Dorsolateral prefrontal cortex (tissue), 120 donors: ENCODE measurements at regions of chr15 and their contacts with region 1.

Region 1: DNA sequence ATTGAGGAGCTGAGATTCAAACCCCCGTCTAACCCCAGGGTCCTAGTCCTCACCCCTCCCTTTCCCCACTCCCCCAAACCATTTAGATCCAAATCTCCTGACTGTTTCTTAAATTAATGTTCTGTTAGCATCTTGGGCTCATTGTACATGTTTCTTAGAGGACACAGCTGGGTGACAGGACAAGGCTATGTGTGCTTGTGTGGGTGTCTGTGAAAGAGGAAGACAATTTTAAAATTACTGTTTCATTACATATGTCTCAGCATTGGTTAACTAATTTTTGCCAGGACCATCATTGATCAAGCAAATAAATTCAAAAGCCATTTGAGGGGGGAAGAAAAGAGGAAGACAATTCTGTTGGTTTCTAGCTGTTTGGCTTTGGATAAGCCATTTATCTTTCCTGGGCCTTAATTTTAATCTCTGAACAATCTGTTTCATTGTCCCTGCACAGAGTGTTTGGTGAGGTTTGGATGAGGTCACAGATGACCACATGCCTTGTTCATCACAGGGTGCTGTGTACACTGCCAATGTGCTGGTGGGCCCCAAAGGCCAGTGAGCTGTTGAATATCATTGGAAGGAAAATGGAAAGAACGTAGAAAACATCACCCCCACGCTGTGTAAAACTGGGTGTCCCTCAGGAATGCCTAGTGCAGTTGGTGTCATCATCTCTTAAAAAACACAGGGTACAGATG is 51.9 kb downstream of the RPLP1 start:
- DNase-seq: no peak
- H3K4me3 ChIP-seq: no peak overlapping the region
- H3K27ac ChIP-seq: peak overlapping the region in 20 of 59 donors; percentile 0 to 69 (median 31)
- H3K27me3 ChIP-seq: no peaks in the 10 kb centered on the region
- CTCF ChIP-seq: no peak

Region 2: DNA sequence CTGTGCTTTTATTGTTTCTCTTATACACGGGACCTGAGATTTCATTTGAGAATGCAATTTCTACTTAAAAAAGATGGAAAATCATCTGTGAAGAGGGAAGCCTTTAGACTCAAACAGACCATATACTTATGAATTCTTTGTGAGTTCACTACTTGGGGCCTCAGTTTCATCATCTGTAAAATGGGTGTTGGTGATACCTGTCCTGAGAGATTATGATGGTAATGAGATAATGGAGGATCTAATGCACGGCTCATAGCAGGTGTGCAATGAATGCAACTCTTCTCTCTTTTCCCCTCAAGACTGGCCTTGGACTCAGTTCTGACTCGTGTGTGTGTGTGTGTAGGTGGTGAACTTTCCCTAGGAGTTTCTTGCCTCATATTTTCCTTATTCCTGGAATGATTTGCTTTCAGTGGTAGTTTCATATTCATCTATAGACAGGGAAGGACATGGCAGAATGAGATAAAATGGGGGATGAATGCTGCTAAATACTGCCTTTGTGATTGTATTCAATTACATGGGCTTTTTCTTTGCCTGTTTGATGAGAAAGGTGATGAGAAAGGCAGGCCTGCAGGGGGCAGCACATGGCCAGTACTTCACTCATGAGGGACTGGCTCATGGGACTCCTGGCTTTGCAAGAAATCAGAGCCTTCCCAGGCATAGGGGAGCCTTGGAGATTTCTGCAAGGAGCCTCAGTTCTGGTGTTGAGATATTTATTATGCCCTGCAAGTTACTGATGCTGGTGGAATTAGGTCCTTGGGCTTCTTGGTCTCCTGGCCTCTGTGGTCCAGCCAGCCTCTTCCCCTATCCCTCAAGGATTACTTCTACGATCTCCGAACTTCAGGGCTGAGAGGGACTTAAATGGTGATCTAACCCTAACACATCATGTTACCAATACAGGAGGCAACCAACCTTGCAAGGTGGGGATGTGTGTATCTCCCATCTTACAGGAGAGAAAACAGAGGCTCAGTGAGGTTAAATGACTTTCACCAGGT is 18.8 kb after region 1 on chr15:
- intact Hi-C with region 1: loop called in 1 of 2 experiments (anchors 2 kb)
- DNase-seq: peak; percentile 59 to 93 (median 83)
- H3K4me3 ChIP-seq: no peak overlapping the region
- H3K27ac ChIP-seq: peak overlapping the region in 6 of 59 donors; percentile 6 to 59 (median 50)
- H3K27me3 ChIP-seq: peaks cover 0 to 4% (median 0%) of the 10 kb centered on the region in 45 donors
- CTCF ChIP-seq: peak; percentile 57 to 91 (median 82)

Region 3: GRCh38 chr15:69903470-69904469 is 399.3 kb after region 1 on chr15:
- intact Hi-C with region 1: no loop called
- DNase-seq: no peak
- H3K4me3 ChIP-seq: no peak overlapping the region
- H3K27ac ChIP-seq: no peak overlapping the region
- H3K27me3 ChIP-seq: peaks cover 0 to 13% (median 0%) of the 10 kb centered on the region in 45 donors
- CTCF ChIP-seq: no peak